ENCODE measurements at regions of chr12 and their contacts with region 1.

Region 1: DNA sequence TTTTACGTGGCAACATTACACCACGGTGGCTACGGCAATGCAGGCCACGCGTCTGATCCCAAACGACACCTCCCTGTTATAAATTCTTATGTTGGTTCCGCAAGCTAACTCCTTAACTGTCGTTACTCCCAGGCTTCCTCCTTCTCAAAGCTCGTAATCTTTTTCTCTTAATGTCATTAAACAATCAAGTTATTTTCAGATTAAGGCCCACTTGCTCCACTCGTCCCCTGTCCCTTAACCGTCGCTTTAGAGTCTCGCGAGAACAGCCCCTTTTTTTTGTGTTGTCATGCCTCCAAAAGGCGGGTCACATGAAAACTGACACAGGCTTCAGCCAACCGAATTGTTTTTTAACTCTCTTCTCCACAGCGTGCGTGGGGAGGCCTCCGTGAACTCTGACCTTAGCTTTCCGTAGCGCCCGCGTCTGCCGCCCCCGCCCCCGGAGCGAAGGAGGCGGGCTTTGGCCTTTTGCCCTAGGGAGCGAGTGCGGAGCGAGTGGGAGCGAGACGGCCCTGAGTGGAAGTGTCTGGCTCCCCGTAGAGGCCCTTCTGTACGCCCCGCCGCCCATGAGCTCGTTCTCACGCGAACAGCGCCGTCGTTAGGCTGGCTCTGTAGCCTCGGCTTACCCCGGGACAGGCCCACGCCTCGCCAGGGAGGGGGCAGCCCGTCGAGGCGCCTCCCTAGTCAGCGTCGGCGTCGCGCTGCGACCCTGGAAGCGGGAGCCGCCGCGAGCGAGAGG is at the start of gene CAND1:
- DNase-seq: peak; percentile 93 to 99 (median 98)
- ATAC-seq: peak; percentile 89
- H3K4me3 ChIP-seq: peak within 1 kb of the TSS; percentile 69
- H3K4me3 Mint-ChIP-seq: peak within 1 kb of the TSS; percentile 80 to 99 (median 95)
- H3K27ac ChIP-seq: peak within 1 kb of the TSS; percentile 91
- H3K27ac Mint-ChIP-seq: peak within 1 kb of the TSS; percentile 97 to 100 (median 99)
- H3K4me1 ChIP-seq: peaks cover 22 to 26% of the 10 kb centered on the region in 2 donors
- H3K4me1 Mint-ChIP-seq: peaks cover 22 to 55% (median 52%) of the 10 kb centered on the region in 7 donors
- H3K27me3 ChIP-seq: no peaks in the 10 kb centered on the region
- H3K27me3 Mint-ChIP-seq: no peaks in the 10 kb centered on the region
- total RNA-seq, gene CAND1: 83.2 to 160 (median 111) TPM

Region 2: GRCh38 chr12:66288121-66288520 is 980.9 kb before region 1 on chr12:
- CTCF ChIA-PET with region 1: no interaction called
- POLR2A ChIA-PET with region 1: no interaction called
- intact Hi-C with region 1: loop called in 1 of 2 experiments (anchors 5 kb)
- DNase-seq: peak in 8 of 9 donors; percentile 48 to 93 (median 89)
- ATAC-seq: peak; percentile 96
- H3K4me3 ChIP-seq: peak overlapping the region; percentile 47
- H3K4me3 Mint-ChIP-seq: peak overlapping the region; percentile 57 to 82 (median 68)
- H3K27ac ChIP-seq: peak overlapping the region; percentile 4
- H3K27ac Mint-ChIP-seq: peak overlapping the region; percentile 70 to 96 (median 85)
- H3K4me1 ChIP-seq: peaks cover 57 to 80% of the 10 kb centered on the region in 2 donors
- H3K4me1 Mint-ChIP-seq: peaks cover 61 to 100% (median 84%) of the 10 kb centered on the region in 7 donors
- H3K27me3 ChIP-seq: no peaks in the 10 kb centered on the region
- H3K27me3 Mint-ChIP-seq: no peaks in the 10 kb centered on the region

Region 3: GRCh38 chr12:67002720-67003119 is 266.3 kb before region 1 on chr12:
- CTCF ChIA-PET with region 1: no interaction called
- POLR2A ChIA-PET with region 1: no interaction called
- intact Hi-C with region 1: no loop called
- DNase-seq: no peak
- ATAC-seq: no peak
- H3K4me3 ChIP-seq: no peak overlapping the region
- H3K4me3 Mint-ChIP-seq: no peak overlapping the region
- H3K27ac ChIP-seq: no peak overlapping the region
- H3K27ac Mint-ChIP-seq: no peak overlapping the region
- H3K4me1 ChIP-seq: no peaks in the 10 kb centered on the region
- H3K4me1 Mint-ChIP-seq: peaks cover 0 to 6% (median 0%) of the 10 kb centered on the region in 7 donors
- H3K27me3 ChIP-seq: no peaks in the 10 kb centered on the region
- H3K27me3 Mint-ChIP-seq: peaks cover 0 to 10% (median 0%) of the 10 kb centered on the region in 5 donors

Region 4: GRCh38 chr12:67068761-67069450 is 200.2 kb before region 1 on chr12:
- CTCF ChIA-PET with region 1: interaction called, 4 read pairs
- POLR2A ChIA-PET with region 1: interaction called, 9 read pairs
- intact Hi-C with region 1: loop called in 1 of 2 experiments (anchors 1 kb)
- DNase-seq: peak in 8 of 9 donors; percentile 29 to 54 (median 42)
- ATAC-seq: peak; percentile 79
- H3K4me3 ChIP-seq: no peak overlapping the region
- H3K4me3 Mint-ChIP-seq: peak overlapping the region; percentile 85 to 96 (median 92)
- H3K27ac ChIP-seq: no peak overlapping the region
- H3K27ac Mint-ChIP-seq: peak overlapping the region in 6 of 9 donors; percentile 31 to 82 (median 79)
- H3K4me1 ChIP-seq: peaks cover 0 to 5% of the 10 kb centered on the region in 2 donors
- H3K4me1 Mint-ChIP-seq: peaks cover 9 to 27% (median 19%) of the 10 kb centered on the region in 7 donors
- H3K27me3 ChIP-seq: no peaks in the 10 kb centered on the region
- H3K27me3 Mint-ChIP-seq: peaks cover 0 to 64% (median 35%) of the 10 kb centered on the region in 5 donors

Region 5: GRCh38 chr12:67327466-67327865 is 58.4 kb after region 1 on chr12:
- CTCF ChIA-PET with region 1: no interaction called
- POLR2A ChIA-PET with region 1: no interaction called
- intact Hi-C with region 1: no loop called
- DNase-seq: no peak
- ATAC-seq: no peak
- H3K4me3 ChIP-seq: no peak overlapping the region
- H3K4me3 Mint-ChIP-seq: no peak overlapping the region
- H3K27ac ChIP-seq: no peak overlapping the region
- H3K27ac Mint-ChIP-seq: no peak overlapping the region
- H3K4me1 ChIP-seq: no peaks in the 10 kb centered on the region
- H3K4me1 Mint-ChIP-seq: peaks cover 0 to 6% (median 5%) of the 10 kb centered on the region in 7 donors
- H3K27me3 ChIP-seq: no peaks in the 10 kb centered on the region
- H3K27me3 Mint-ChIP-seq: no peaks in the 10 kb centered on the region

Region 6: GRCh38 chr12:67482751-67483671 is 213.9 kb after region 1 on chr12:
- CTCF ChIA-PET with region 1: no interaction called
- POLR2A ChIA-PET with region 1: interaction called, 4 read pairs
- intact Hi-C with region 1: loop called in 1 of 2 experiments (anchors 2 kb)
- DNase-seq: peak in 8 of 9 donors; percentile 47 to 89 (median 82)
- ATAC-seq: peak; percentile 89
- H3K4me3 ChIP-seq: no peak overlapping the region
- H3K4me3 Mint-ChIP-seq: peak overlapping the region in 9 of 10 donors; percentile 1 to 61 (median 26)
- H3K27ac ChIP-seq: peak overlapping the region; percentile 49
- H3K27ac Mint-ChIP-seq: peak overlapping the region; percentile 41 to 91 (median 82)
- H3K4me1 ChIP-seq: peaks cover 39 to 45% of the 10 kb centered on the region in 2 donors
- H3K4me1 Mint-ChIP-seq: peaks cover 28 to 49% (median 46%) of the 10 kb centered on the region in 7 donors
- H3K27me3 ChIP-seq: no peaks in the 10 kb centered on the region
- H3K27me3 Mint-ChIP-seq: no peaks in the 10 kb centered on the region

Region 7: DNA sequence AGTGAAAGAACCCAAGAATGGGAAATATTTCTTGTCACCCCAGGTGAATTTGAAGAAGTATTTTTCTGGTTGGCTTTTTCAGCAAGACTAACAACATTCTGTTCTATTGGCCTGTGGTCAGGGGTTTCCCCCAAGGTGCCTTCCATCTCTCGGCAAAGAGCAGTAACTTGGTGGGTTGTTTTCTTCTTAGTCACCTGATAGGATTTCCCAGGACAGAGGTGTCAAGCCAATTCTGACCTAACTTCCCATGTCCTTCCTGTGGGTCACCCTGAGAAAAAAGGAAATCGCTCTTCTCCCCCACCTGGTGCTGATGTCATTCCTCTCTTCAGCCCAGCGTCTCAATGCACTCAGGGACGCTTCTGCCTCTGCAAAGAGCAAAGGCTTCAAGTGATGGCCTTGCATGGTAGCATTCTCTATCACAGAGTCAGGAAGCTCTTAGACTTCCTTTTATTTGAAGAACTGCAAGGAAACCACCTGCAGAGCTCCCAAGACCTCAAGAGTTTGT is 906.5 kb after region 1 on chr12:
- CTCF ChIA-PET with region 1: no interaction called
- POLR2A ChIA-PET with region 1: interaction called, 4 read pairs
- intact Hi-C with region 1: loop called in 1 of 2 experiments (anchors 1 kb)
- DNase-seq: peak; percentile 35 to 90 (median 86)
- ATAC-seq: peak; percentile 93
- H3K4me3 ChIP-seq: peak overlapping the region; percentile 40
- H3K4me3 Mint-ChIP-seq: peak overlapping the region; percentile 69 to 86 (median 84)
- H3K27ac ChIP-seq: peak overlapping the region; percentile 78
- H3K27ac Mint-ChIP-seq: peak overlapping the region; percentile 87 to 97 (median 93)
- H3K4me1 ChIP-seq: peaks cover 20 to 65% of the 10 kb centered on the region in 2 donors
- H3K4me1 Mint-ChIP-seq: peaks cover 30 to 82% (median 67%) of the 10 kb centered on the region in 7 donors
- H3K27me3 ChIP-seq: no peaks in the 10 kb centered on the region
- H3K27me3 Mint-ChIP-seq: no peaks in the 10 kb centered on the region

Region 8: DNA sequence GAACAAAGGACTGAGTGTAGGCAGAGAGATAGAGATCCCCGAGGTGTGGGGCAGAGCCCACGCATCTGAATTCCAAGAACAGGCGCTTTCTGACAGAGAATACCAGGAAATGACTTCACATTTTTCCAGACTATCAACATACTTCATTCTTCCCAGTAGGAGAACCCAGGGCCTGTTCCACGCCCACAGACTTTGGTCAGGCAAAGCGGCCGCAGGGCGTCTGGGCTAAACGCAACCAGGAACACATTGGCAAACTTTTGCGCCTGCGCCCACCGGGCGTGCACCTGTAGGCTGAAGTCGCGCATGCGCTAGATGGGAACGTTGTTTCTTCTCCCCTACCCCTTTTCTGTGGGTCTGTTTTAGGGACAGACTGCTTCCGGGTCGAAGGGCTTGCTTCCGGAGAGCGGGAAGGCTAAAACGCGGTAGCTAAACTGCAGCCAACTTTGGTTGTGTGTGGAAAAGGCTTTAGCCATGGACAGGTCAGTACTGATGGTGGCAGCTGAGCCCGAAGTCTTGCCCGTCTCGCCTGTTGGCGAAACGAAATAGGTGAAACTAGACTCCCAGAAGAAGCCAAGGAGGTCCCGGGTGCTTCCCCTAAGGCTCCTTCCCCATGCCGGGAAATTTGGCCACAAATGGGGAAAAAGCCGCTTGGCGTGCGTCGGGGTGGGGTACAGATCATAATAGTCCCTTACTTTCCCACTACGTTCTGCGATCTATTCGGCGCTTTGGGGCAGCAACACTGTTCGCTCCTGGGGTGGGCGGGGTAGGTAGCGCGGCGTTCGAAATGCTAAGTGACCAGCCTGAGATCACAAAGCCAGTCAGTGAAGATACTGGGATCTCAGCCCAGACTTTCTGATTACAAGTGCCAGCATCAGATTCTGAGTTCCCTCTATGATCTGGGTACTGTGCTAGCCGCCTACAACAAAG is 1417.8 kb after region 1 on chr12 and contains the start of gene NUP107:
- CTCF ChIA-PET with region 1: no interaction called
- POLR2A ChIA-PET with region 1: no interaction called
- intact Hi-C with region 1: loop called (anchors 1 to 5 kb)
- DNase-seq: peak; percentile 92 to 97 (median 95)
- ATAC-seq: peak; percentile 99
- H3K4me3 ChIP-seq: peak within 1 kb of the TSS; percentile 90
- H3K4me3 Mint-ChIP-seq: peak within 1 kb of the TSS; percentile 94 to 100 (median 98)
- H3K27ac ChIP-seq: peak within 1 kb of the TSS; percentile 85
- H3K27ac Mint-ChIP-seq: peak within 1 kb of the TSS; percentile 96 to 100 (median 99)
- H3K4me1 ChIP-seq: peaks cover 13 to 16% of the 10 kb centered on the region in 2 donors
- H3K4me1 Mint-ChIP-seq: peaks cover 10 to 51% (median 42%) of the 10 kb centered on the region in 7 donors
- H3K27me3 ChIP-seq: no peaks in the 10 kb centered on the region
- H3K27me3 Mint-ChIP-seq: peaks cover 0 to 2% (median 0%) of the 10 kb centered on the region in 5 donors
- total RNA-seq, gene NUP107: 45.2 to 80.9 (median 69.0) TPM

Measured in naive thymus-derived CD4-positive, alpha-beta T cell (primary cell).